Naive thymus-derived CD4-positive, alpha-beta T cell (primary cell): ENCODE measurements at regions of chr3 and their contacts with region 1.

Region 1: GRCh38 chr3:44477312-44478030 is at the start of gene ZNF445:
- DNase-seq: peak; percentile 66 to 85 (median 79)
- ATAC-seq: peak; percentile 96
- H3K4me3 ChIP-seq: peak within 1 kb of the TSS; percentile 91
- H3K4me3 Mint-ChIP-seq: peak within 1 kb of the TSS; percentile 85 to 98 (median 92)
- H3K27ac ChIP-seq: peak within 1 kb of the TSS; percentile 70
- H3K27ac Mint-ChIP-seq: peak within 1 kb of the TSS; percentile 79 to 95 (median 87)
- H3K4me1 ChIP-seq: peaks cover 4 to 18% of the 10 kb centered on the region in 2 donors
- H3K4me1 Mint-ChIP-seq: peaks cover 16 to 51% (median 40%) of the 10 kb centered on the region in 7 donors
- H3K27me3 ChIP-seq: no peaks in the 10 kb centered on the region
- H3K27me3 Mint-ChIP-seq: no peaks in the 10 kb centered on the region
- total RNA-seq, gene ZNF445: 16.8 to 37.6 (median 24.4) TPM

Region 2: GRCh38 chr3:44439499-44440295 is 37.8 kb before region 1 on chr3:
- CTCF ChIA-PET with region 1: no interaction called
- POLR2A ChIA-PET with region 1: no interaction called
- intact Hi-C with region 1: loop called (anchors 1 to 5 kb)
- DNase-seq: peak; percentile 14 to 81 (median 69)
- ATAC-seq: peak; percentile 88
- H3K4me3 ChIP-seq: peak overlapping the region; percentile 17
- H3K4me3 Mint-ChIP-seq: peak overlapping the region; percentile 66 to 85 (median 78)
- H3K27ac ChIP-seq: peak overlapping the region; percentile 65
- H3K27ac Mint-ChIP-seq: peak overlapping the region; percentile 88 to 97 (median 95)
- H3K4me1 ChIP-seq: peaks cover 16 to 24% of the 10 kb centered on the region in 2 donors
- H3K4me1 Mint-ChIP-seq: peaks cover 23 to 44% (median 40%) of the 10 kb centered on the region in 7 donors
- H3K27me3 ChIP-seq: no peaks in the 10 kb centered on the region
- H3K27me3 Mint-ChIP-seq: no peaks in the 10 kb centered on the region

Region 3: GRCh38 chr3:44501971-44502370 is 24.5 kb after region 1 on chr3:
- CTCF ChIA-PET with region 1: no interaction called
- POLR2A ChIA-PET with region 1: no interaction called
- intact Hi-C with region 1: no loop called
- DNase-seq: no peak
- ATAC-seq: no peak
- H3K4me3 ChIP-seq: no peak overlapping the region
- H3K4me3 Mint-ChIP-seq: no peak overlapping the region
- H3K27ac ChIP-seq: no peak overlapping the region
- H3K27ac Mint-ChIP-seq: no peak overlapping the region
- H3K4me1 ChIP-seq: no peaks in the 10 kb centered on the region
- H3K4me1 Mint-ChIP-seq: peaks cover 3 to 22% (median 13%) of the 10 kb centered on the region in 7 donors
- H3K27me3 ChIP-seq: no peaks in the 10 kb centered on the region
- H3K27me3 Mint-ChIP-seq: no peaks in the 10 kb centered on the region

Region 4: DNA sequence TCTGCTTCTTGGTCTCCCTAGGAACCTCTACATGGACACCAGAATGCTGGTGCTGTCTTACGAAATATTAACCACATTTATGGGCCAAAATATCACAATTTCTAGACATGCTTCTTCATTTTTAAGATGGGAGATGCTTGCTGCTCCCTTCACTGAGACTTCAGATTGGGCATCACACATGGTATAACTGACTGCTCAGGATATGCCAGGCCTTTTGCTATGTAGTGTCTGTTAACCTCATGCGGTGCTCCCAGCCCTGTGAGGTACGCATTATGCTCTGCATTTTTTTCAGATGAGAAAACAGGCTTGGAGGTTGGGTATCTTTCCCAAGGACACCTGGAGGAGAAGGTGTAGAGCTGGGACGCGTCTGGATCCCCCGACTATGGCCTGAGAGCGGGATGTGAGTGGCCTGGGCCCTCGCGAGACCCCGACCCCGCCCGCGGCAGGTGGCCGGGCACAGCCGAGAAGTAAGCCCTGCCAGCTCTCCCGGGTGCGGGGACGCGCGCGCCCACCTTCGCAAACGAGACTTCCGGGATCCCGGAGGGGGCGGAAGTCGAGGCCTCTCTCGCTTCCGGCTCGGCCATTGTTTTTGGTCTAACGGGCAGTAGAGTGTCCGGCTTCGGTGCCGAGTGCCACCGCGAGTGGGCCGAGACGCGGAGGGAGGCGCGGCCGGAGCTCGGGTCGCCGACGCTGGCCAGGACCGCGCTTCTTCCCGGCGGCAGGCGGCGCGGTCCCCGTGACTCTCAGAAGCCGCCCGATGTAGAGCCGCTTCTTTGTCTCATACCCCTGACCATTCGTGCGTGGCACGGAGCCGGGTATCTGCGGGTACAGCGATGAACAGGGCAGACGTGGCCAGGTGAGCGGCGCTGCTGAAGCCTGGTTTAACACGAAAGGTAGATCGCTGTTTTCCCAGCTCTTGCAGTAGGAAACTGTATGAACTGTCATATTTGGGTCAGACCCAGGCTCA is 77.4 kb after region 1 on chr3 and contains the start of gene ZKSCAN7:
- CTCF ChIA-PET with region 1: no interaction called
- POLR2A ChIA-PET with region 1: no interaction called
- intact Hi-C with region 1: loop called in 1 of 2 experiments (anchors 1 kb)
- DNase-seq: peak; percentile 12 to 49 (median 42)
- ATAC-seq: peak; percentile 71
- H3K4me3 ChIP-seq: peak within 1 kb of the TSS; percentile 87
- H3K4me3 Mint-ChIP-seq: peak within 1 kb of the TSS; percentile 78 to 94 (median 91)
- H3K27ac ChIP-seq: peak within 1 kb of the TSS; percentile 47
- H3K27ac Mint-ChIP-seq: peak within 1 kb of the TSS; percentile 6 to 94 (median 82)
- H3K4me1 ChIP-seq: peaks cover 9 to 14% of the 10 kb centered on the region in 2 donors
- H3K4me1 Mint-ChIP-seq: peaks cover 10 to 34% (median 26%) of the 10 kb centered on the region in 7 donors
- H3K27me3 ChIP-seq: no peaks in the 10 kb centered on the region
- H3K27me3 Mint-ChIP-seq: peaks cover 0 to 4% (median 1%) of the 10 kb centered on the region in 5 donors
- total RNA-seq, gene ZKSCAN7: 1.1 to 4.5 (median 1.7) TPM

Region 5: DNA sequence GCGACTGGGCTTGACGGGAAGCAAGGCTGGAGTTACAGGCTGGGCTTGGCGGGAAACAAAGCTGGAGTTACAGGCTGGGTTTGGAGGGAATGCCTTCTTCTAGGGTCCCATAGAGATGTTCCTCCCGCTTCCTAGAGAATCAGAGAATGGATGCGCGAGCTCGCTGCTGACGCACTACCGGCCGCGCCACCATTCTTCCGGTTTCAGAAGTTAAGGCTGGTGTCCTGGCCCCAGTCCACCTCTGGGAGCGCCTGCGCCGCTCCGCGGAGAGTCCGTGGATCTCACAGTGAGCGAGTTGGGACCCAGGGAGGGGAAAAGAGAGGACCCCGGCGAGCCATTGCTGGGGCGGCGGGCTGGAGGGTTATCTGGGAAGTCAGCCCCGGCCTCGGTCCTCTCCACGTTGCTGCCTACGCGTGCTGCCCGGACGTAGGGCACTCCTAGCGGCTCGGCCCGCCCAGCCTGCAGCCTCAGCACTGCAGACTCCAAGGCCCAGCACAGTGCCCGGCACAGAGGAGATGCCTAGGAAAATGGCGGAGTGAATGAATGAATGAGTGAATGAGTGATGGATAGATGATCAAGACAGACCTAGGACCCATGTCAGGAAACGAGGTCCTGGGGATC is 235.1 kb after region 1 on chr3 and contains the start of gene ZNF502:
- CTCF ChIA-PET with region 1: no interaction called
- POLR2A ChIA-PET with region 1: no interaction called
- intact Hi-C with region 1: loop called in 1 of 2 experiments (anchors 1 kb)
- DNase-seq: peak; percentile 20 to 60 (median 33)
- ATAC-seq: peak; percentile 81
- H3K4me3 ChIP-seq: peak within 1 kb of the TSS; percentile 65
- H3K4me3 Mint-ChIP-seq: peak within 1 kb of the TSS; percentile 49 to 96 (median 91)
- H3K27ac ChIP-seq: peak within 1 kb of the TSS; percentile 44
- H3K27ac Mint-ChIP-seq: peak within 1 kb of the TSS; percentile 4 to 85 (median 75)
- H3K4me1 ChIP-seq: no peaks in the 10 kb centered on the region
- H3K4me1 Mint-ChIP-seq: peaks cover 4 to 25% (median 16%) of the 10 kb centered on the region in 7 donors
- H3K27me3 ChIP-seq: no peaks in the 10 kb centered on the region
- H3K27me3 Mint-ChIP-seq: peaks cover 0 to 35% (median 16%) of the 10 kb centered on the region in 5 donors
- total RNA-seq, gene ZNF502: 1.1 to 6.1 (median 4.1) TPM

Region 6: DNA sequence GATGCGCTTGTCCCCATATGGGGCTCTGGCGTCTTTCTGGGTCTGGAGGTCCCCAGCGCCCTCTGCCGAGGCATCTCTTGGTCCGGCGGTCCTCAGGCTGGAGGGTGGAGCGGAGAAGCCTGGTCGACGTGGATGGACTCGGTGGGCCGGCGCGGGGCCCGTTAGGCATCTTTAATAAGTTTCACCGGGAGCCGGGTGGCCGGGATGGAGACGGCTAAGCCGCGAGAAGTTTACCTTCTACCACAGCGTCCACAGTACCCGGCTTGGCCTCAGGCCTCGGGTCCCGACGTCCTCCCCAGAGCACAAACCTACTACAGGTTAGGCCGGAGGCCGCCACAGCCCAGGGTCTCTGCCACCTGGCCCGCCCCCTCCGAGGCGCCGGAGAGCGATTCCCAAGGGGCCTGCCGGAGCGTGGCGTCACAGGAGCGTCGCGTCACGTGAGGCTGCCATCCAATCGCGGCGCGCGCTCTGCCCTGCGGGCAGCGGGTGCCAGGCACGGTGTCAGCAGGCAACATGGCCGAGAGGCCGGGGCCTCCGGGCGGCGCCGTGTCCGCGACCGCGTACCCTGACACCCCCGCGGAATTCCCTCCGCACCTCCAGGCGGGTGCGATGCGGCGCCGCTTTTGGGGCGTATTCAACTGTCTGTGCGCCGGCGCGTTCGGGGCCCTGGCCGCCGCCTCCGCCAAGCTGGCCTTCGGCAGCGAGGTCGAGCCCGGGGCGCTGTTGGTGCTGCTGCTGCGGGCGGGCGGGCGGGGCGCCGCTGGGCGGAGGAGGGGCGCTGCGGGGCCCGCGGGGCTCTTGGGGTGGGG is 384.1 kb after region 1 on chr3 and contains the start of gene TMEM42:
- CTCF ChIA-PET with region 1: no interaction called
- POLR2A ChIA-PET with region 1: no interaction called
- intact Hi-C with region 1: loop called (anchors 2 kb)
- DNase-seq: peak; percentile 81 to 89 (median 84)
- ATAC-seq: peak; percentile 97
- H3K4me3 ChIP-seq: peak within 1 kb of the TSS; percentile 78
- H3K4me3 Mint-ChIP-seq: peak within 1 kb of the TSS; percentile 88 to 92 (median 91)
- H3K27ac ChIP-seq: peak within 1 kb of the TSS; percentile 76
- H3K27ac Mint-ChIP-seq: peak within 1 kb of the TSS; percentile 86 to 97 (median 92)
- H3K4me1 ChIP-seq: peaks cover 15 to 29% of the 10 kb centered on the region in 2 donors
- H3K4me1 Mint-ChIP-seq: peaks cover 23 to 48% (median 43%) of the 10 kb centered on the region in 7 donors
- H3K27me3 ChIP-seq: no peaks in the 10 kb centered on the region
- H3K27me3 Mint-ChIP-seq: no peaks in the 10 kb centered on the region
- total RNA-seq, gene TMEM42: 12.1 to 25.1 (median 16.4) TPM